ENCODE measurements at regions of chr18 and their contacts with region 1.

Region 1: DNA sequence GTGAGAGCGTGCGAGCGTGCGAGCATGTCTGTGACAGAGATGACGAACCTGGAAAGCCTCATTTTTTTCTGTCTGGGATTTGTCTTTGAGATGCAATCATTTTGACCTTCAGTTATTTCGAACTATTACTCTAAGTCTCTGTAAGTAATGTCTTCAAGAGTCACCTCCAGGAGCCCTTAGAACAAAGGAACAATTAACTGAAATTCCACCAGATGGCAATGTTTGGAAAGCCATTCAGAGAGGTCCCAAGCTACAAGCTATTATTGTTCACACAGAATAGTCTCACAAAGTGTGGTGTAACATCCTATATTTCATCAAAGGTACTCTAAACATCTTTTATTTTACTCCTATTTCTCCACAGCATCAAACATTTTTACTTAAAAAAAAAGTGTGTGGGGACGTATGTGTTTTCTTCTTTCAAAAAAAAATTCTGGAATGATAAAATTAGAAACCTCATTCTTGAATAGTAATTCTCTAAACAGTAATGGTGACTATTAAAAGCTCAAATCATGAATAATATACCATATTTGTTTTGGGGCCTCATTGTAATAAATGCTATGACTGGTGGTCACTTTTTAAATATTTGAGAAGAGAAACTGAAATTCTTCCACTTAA is 35.1 kb upstream of the MAPRE2 start:
- DNase-seq: no peak
- H3K4me3 ChIP-seq: no peak overlapping the region
- H3K27ac ChIP-seq: no peak overlapping the region
- H3K4me1 ChIP-seq: no peaks in the 10 kb centered on the region
- H3K27me3 ChIP-seq: no peaks in the 10 kb centered on the region
- CTCF ChIP-seq: peak; percentile 81

Region 2: DNA sequence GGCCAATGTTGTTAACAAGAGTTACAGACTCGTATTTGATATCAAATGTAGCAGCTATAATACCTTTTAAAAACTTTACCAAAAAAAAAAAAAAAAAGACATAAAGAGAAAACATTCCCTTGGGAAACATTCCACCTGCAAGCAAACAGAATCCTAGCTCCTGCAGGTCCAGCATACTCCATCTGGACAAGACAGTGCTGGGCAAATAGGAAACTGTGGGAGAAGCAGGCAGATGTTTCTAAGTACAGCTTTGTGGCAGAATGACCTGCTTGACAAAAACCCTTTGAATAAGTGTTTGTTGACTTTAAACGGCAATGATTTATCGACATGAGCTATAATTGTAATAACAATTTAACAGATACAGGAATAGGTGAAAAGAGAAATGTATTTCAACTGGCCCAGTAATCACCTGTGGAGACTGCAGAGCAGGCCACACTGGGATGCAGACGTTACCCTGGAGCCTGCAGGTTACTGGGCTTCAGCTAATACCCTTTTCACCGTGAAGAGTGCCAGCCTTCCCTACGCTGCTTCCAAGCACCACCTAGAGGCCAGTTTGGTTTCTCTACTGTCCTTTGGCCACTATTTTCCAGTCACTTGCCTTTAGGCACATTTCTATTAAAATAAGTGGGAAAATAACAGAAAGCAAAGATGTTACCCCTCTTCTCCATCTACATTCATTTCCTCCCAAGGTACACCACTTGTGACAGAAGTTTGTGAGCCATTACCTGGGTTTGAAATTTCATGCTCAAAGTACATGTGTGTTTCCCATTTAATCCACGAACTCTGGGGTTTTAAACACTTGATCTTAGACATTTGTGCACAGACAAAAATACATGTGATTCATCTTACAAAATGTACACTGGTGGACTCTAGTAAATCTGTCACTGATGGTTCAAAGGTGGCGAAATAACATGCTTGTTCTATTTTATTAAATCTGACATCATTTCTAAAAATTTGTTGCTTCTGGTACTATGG is 137.8 kb after region 1 on chr18:
- intact Hi-C with region 1: loop called (anchors 1 kb)
- DNase-seq: no peak
- H3K4me3 ChIP-seq: no peak overlapping the region
- H3K27ac ChIP-seq: peak overlapping the region; percentile 21
- H3K4me1 ChIP-seq: peaks cover 23% of the 10 kb centered on the region
- H3K27me3 ChIP-seq: no peaks in the 10 kb centered on the region
- CTCF ChIP-seq: peak; percentile 85

Region 3: GRCh38 chr18:35345460-35345921 is 339.4 kb after region 1 on chr18:
- intact Hi-C with region 1: loop called (anchors 5 kb)
- DNase-seq: no peak
- H3K4me3 ChIP-seq: peak overlapping the region; percentile 9
- H3K27ac ChIP-seq: peak overlapping the region; percentile 99
- H3K4me1 ChIP-seq: peaks cover 49% of the 10 kb centered on the region
- H3K27me3 ChIP-seq: no peaks in the 10 kb centered on the region
- CTCF ChIP-seq: no peak

Measured in left ventricle myocardium inferior (tissue), 1 donor.